Calu3 (cell line): ENCODE measurements at regions of chr12 and their contacts with region 1.

Region 1: DNA sequence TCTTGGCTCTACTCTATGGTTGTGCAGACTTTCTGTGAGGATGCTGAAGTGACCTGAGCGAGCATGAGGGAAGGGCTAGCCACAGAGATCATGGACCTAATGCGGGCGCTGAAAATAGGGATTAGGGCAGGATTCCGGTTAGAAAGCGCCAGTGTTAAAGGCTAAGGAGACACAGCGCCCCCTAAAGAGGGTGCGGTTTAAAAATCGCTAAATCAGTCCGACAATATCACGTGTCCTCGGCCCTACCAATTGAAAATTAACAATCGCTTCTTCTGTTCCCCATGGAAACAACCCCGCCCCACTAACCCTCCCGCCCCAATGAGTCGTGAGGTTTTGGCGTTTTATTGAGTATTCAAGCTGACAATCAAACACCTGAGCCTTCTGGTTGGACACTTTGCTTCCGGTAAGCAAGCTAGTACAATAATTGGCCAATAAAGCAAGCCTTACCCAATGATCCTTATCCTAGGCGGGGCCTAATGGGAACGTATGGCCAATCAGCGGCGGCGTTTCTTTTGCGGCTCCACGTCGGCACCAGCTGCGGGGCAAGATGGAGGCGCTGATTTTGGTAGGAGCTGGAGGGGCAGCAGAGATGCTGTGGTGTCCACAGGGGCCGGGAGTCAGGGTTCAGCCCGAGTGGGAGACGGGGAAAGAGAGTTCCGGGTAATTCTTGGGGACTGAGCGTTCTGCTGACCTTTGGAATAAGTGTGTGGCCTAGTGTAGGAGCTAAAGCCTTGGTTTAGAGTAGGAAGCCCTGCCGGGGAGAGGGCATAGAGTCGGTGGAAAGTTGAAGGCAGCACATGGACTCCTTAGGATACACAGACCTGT is at the start of gene COPZ1:
- DNase-seq: peak; percentile 95
- H3K4me3 Mint-ChIP-seq: peak within 1 kb of the TSS; percentile 97
- H3K27ac Mint-ChIP-seq: peak within 1 kb of the TSS; percentile 97
- H3K4me1 Mint-ChIP-seq: peaks cover 34% of the 10 kb centered on the region
- H3K27me3 Mint-ChIP-seq: no peaks in the 10 kb centered on the region
- CTCF ChIP-seq: peak; percentile 53
- total RNA-seq, gene COPZ1: 173 and 190 TPM in 2 replicates

Region 2: DNA sequence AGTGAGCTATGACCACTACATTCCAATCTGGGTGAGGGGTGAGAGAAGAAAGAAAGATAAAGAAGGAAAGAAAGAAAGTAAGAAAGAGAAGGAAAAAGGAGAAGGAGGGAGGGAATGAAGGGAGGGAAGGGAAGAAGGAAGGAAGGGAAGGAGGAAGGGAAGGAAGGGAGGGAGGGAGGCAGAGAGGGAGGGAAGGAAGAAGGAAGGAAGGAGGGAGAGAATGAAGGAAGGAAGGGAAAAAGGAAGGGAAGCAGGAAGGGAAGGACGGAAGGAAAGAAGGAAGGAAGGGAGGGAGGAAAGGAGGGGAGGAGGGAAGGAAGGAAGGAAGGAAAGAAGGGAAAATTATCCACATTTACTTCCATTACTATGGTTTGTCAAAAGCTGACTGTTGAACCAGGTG is 425.6 kb before region 1 on chr12:
- CTCF ChIA-PET with region 1: no interaction called
- intact Hi-C with region 1: no loop called
- DNase-seq: no peak
- H3K4me3 Mint-ChIP-seq: no peak overlapping the region
- H3K27ac Mint-ChIP-seq: no peak overlapping the region
- H3K4me1 Mint-ChIP-seq: no peaks in the 10 kb centered on the region
- H3K27me3 Mint-ChIP-seq: peaks cover 68% of the 10 kb centered on the region
- CTCF ChIP-seq: no peak

Region 3: DNA sequence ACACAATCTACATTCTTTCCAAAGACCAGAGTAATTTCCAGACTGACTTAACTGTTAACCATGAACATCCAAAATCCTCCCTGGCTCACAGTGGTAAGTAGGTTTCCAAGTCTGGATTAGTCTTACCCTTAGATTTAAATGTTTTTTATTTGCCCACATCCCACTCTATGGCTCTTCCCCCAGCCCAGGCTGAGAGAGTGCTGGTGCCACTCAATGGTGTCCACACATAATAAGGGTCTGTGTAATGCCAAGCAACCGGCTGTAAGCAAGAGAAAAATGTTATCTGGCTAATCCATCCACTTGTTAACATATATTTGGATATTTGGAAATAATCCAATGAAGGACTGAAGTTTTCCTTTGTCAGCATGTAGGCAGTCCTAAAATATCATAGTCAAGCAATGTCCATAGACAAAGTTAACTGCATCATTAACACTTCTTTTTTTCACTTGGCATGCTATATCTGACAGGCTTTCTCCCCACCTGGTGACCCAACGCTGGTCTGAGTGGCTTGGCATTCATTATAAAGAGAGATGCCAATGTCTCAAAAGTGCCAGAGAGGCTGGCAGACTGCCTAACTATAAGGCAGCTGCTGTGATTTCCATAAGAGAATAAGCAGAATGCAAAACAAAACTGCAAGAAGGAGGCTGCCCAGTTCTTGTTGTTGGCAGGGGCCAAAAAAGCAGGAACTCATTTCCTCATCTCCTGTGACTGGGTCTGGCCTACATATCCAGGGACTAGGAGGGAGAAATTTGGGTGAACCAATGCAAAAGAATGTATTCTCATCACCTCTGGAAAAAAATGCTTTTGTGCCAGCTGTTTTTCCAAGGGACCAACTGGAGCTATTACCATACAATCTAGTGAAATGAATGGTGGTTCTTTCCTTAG is 400.1 kb before region 1 on chr12:
- CTCF ChIA-PET with region 1: no interaction called
- intact Hi-C with region 1: no loop called
- DNase-seq: no peak
- H3K4me3 Mint-ChIP-seq: no peak overlapping the region
- H3K27ac Mint-ChIP-seq: no peak overlapping the region
- H3K4me1 Mint-ChIP-seq: peaks cover 9% of the 10 kb centered on the region
- H3K27me3 Mint-ChIP-seq: peaks cover 63% of the 10 kb centered on the region
- CTCF ChIP-seq: no peak

Region 4: GRCh38 chr12:54259194-54260011 is 65.4 kb before region 1 on chr12:
- CTCF ChIA-PET with region 1: interaction called, 6 read pairs
- intact Hi-C with region 1: loop called (anchors 2 kb)
- DNase-seq: peak; percentile 66
- H3K4me3 Mint-ChIP-seq: peak overlapping the region; percentile 45
- H3K27ac Mint-ChIP-seq: peak overlapping the region; percentile 47
- H3K4me1 Mint-ChIP-seq: peaks cover 15% of the 10 kb centered on the region
- H3K27me3 Mint-ChIP-seq: no peaks in the 10 kb centered on the region
- CTCF ChIP-seq: no peak

Region 5: GRCh38 chr12:54294152-54294952 is 30.5 kb before region 1 on chr12:
- CTCF ChIA-PET with region 1: interaction called, 37 read pairs
- intact Hi-C with region 1: loop called (anchors 1 kb)
- DNase-seq: peak; percentile 77
- H3K4me3 Mint-ChIP-seq: no peak overlapping the region
- H3K27ac Mint-ChIP-seq: peak overlapping the region; percentile 40
- H3K4me1 Mint-ChIP-seq: peaks cover 10% of the 10 kb centered on the region
- H3K27me3 Mint-ChIP-seq: peaks cover 7% of the 10 kb centered on the region
- CTCF ChIP-seq: peak; percentile 92

Region 6: DNA sequence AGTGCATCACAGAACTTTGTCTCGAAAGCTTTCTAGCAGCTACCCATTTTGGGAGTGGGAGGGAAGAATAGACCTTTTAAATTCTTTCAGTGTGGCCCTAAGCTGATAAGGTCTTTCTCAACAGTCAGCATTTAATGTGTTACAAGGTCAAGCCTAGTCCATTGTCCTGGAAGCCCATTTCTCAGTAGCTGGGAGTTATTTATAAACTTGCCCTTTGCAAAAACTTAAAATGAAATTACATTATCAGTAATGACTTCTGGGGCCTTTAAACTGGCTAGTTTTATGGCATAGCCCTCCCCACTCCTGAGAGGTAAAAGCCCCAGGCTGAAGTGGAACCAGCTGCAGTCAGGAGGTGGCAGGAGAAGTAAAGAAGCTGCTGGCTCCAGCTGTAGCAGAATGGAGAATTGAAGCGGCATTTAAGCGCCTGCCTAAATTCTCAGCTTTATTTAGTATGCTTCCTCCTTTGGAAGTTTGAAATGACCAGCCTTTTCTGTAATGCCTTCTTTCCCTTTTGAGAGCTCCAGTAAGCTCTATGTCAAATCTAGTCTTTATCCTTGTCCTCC is 12.5 kb after region 1 on chr12:
- CTCF ChIA-PET with region 1: interaction called, 10 read pairs
- intact Hi-C with region 1: no loop called
- DNase-seq: no peak
- H3K4me3 Mint-ChIP-seq: no peak overlapping the region
- H3K27ac Mint-ChIP-seq: no peak overlapping the region
- H3K4me1 Mint-ChIP-seq: no peaks in the 10 kb centered on the region
- H3K27me3 Mint-ChIP-seq: no peaks in the 10 kb centered on the region
- CTCF ChIP-seq: no peak